Head of caudate nucleus (tissue), 42 donors: ENCODE measurements at regions of chr12 and their contacts with region 1.

Region 1: DNA sequence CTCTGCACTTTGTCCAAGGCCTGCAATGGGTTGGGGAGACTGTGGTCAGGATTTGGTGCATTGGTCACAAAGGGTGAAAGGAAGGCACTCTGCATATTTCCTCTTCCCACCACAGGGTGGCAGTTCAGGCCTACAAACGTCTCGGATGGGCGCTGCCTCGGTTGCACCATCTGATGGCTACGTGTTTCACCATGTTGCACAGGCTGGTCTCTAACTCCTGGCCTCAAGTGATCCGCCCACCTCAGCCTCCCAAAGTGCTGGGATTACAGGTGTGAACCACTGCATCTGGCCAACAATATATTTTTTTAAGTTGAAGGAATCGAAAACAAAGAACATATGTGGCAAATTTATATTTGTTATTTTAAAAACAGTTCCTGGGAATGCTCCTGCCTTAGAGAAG is 35.1 kb downstream of the TMBIM6 start:
- DNase-seq: peak; percentile 41 to 89 (median 76)

Region 2: GRCh38 chr12:49750027-49750995 is 26.1 kb before region 1 on chr12:
- intact Hi-C with region 1: no loop called
- DNase-seq: no peak

Region 3: GRCh38 chr12:49838973-49839633 is 62.7 kb after region 1 on chr12:
- intact Hi-C with region 1: loop called (anchors 1 kb)
- DNase-seq: peak in 28 of 42 donors; percentile 9 to 77 (median 44)

Region 4: DNA sequence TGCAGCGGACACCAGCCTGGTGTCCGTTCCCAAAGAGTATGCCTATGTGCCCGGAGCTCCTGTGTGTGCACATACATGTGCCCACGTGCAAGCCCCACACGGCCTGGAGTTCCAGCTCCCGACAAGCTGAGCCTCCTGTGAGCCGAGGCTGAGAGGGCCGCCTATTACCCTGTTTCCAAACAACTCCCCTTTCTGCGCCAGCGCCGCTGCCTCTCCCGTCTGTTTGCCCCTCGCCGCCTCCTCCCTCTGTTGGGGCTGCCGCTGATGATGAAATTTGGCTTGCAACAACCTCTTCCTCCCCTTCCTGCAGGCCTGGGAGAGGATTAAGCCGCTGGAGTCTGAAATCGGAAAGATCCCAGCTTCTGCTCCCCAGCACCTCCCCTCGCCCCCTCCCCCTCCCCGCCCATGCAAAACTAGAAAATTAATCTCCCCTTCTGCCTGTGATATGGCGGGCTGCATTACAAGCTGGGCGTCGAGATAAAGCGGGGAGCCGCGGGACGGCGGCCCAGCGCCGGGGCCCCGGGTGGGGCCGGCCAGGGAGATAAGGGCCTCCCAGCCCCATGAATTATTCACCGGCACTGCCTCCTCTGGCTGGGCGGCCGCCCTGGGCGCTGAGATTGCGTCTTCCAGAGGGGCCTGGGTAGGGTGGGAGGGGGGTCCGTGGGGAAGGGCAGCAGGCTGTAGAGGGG is 274.1 kb after region 1 on chr12:
- intact Hi-C with region 1: no loop called
- DNase-seq: peak in 23 of 42 donors; percentile 24 to 69 (median 48)